Heart right ventricle (tissue), 16 donors: ENCODE measurements at regions of chr1 and their contacts with region 1.

Region 1: GRCh38 chr1:40185951-40186864 is 25.0 kb downstream of the RLF start:
- DNase-seq: no peak
- ATAC-seq: peak in 1 of 8 donors; percentile 12
- H3K4me3 ChIP-seq: no peak overlapping the region
- H3K27ac ChIP-seq: peak overlapping the region in 1 of 10 donors; percentile 72
- H3K4me1 ChIP-seq: peaks cover 3 to 72% (median 50%) of the 10 kb centered on the region in 9 donors
- H3K27me3 ChIP-seq: no peaks in the 10 kb centered on the region
- CTCF ChIP-seq: no peak

Region 2: DNA sequence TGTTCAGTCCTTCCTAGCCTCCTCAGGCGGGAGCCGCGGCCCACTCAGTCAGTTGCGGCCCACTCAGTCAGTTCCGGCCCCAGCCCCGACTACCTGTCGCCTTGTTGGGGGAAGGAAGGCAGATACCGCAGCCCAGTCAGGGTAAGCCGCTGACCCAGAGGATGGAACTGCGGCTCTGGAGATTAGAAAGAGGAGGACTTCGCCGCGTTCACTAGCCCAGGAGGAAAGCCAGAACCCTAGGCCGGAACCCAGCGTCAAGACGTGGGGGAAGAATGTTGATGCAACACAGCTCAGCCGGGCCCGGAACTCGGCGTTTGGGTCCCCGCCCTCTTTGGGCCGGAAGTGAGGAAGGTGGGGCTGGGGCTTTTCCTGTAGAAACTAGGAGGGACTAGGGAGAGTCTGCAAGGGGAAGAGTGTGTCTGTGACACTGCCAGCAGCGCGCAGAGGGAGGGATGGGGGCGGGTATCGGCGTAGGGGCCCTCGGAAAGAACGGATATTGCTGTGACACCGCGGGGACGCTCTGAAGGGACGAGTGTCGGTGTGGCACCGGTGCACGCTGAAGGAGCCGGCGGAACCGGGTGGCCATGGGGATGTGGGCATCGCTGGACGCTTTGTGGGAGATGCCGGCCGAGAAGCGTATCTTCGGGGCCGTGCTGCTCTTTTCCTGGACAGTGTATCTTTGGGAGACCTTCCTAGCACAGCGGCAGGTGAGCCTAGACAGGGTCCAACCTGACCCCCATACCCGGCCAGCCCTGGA is 71.7 kb after region 1 on chr1 and contains the start of gene ZMPSTE24:
- intact Hi-C with region 1: loop called in 1 of 10 experiments (anchors 10 kb)
- DNase-seq: peak; percentile 93 to 98
- ATAC-seq: peak; percentile 99 to 100 (median 100)
- H3K4me3 ChIP-seq: peak within 1 kb of the TSS; percentile 71 to 100 (median 93)
- H3K27ac ChIP-seq: peak within 1 kb of the TSS; percentile 80 to 98 (median 90)
- H3K4me1 ChIP-seq: peaks cover 0 to 61% (median 37%) of the 10 kb centered on the region in 9 donors
- H3K27me3 ChIP-seq: no peaks in the 10 kb centered on the region
- CTCF ChIP-seq: no peak
- total RNA-seq, gene ZMPSTE24: 19.9 to 47.5 (median 30.2) TPM

Region 3: GRCh38 chr1:40722636-40723035 is 536.4 kb after region 1 on chr1:
- intact Hi-C with region 1: no loop called
- DNase-seq: no peak
- ATAC-seq: no peak
- H3K4me3 ChIP-seq: no peak overlapping the region
- H3K27ac ChIP-seq: no peak overlapping the region
- H3K4me1 ChIP-seq: peaks cover 0 to 83% (median 56%) of the 10 kb centered on the region in 9 donors
- H3K27me3 ChIP-seq: no peaks in the 10 kb centered on the region
- CTCF ChIP-seq: peak in 1 of 9 donors; percentile 9